ENCODE measurements at regions of chr11 and their contacts with region 1.

Region 1: DNA sequence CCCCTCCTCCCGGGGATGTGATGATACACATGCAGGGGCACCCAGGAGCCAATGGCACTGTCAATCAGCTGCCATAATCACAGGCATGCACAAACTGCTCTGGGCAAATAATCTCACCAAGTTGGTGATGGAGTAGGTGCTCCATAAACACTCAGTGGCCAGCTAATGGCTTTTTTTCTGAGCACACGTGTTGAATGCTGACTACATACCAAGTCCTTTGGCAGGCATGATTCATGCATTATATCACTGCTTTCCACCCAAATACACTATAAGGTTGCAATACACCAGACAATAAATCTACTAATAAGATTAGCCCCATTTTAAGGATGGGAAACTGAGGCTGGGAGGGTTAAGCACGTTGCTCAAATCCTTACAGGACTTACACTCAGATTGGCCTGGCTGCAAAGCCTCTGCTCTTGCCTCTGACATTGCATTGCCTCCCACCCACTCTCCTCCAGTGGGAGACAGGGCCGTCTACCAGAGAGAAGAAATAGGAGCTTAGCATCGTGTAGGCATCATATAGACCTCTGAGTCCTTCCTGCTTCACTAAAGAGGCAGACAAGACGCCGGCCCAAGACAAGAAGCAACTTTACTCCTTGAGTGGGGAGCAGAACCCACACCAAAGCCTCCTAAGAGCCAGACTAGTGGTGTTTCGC is 32.7 kb upstream of the ACCSL start:
- DNase-seq: peak in 2 of 5 donors; percentile 6 to 10
- H3K4me3 ChIP-seq: no peak overlapping the region
- H3K27ac ChIP-seq: no peak overlapping the region
- H3K4me1 ChIP-seq: peaks cover 14% of the 10 kb centered on the region
- H3K27me3 ChIP-seq: no peaks in the 10 kb centered on the region
- CTCF ChIP-seq: no peak
- EP300 ChIP-seq: no peak
- POLR2A ChIP-seq: no peak

Region 2: GRCh38 chr11:44065841-44066731 is 51.0 kb after region 1 on chr11 and contains the start of gene ACCS:
- intact Hi-C with region 1: no loop called
- DNase-seq: peak; percentile 95 to 98 (median 95)
- H3K4me3 ChIP-seq: peak within 1 kb of the TSS; percentile 76
- H3K27ac ChIP-seq: peak within 1 kb of the TSS; percentile 75 to 92
- H3K4me1 ChIP-seq: peaks cover 2% of the 10 kb centered on the region
- H3K27me3 ChIP-seq: no peaks in the 10 kb centered on the region
- CTCF ChIP-seq: peak; percentile 88 to 95 (median 90)
- EP300 ChIP-seq: no peak
- POLR2A ChIP-seq: peak; percentile 74
- total RNA-seq, gene ACCS: 11.2 to 32.4 (median 26.4) TPM

Region 3: GRCh38 chr11:45544826-45545225 is 1529.7 kb after region 1 on chr11:
- intact Hi-C with region 1: loop called in 1 of 4 experiments (anchors 5 kb)
- DNase-seq: no peak
- H3K4me3 ChIP-seq: no peak overlapping the region
- H3K27ac ChIP-seq: no peak overlapping the region
- H3K4me1 ChIP-seq: no peaks in the 10 kb centered on the region
- H3K27me3 ChIP-seq: no peaks in the 10 kb centered on the region
- CTCF ChIP-seq: no peak
- EP300 ChIP-seq: no peak
- POLR2A ChIP-seq: no peak